ENCODE measurements at regions of chr16 and their contacts with region 1.

Region 1: DNA sequence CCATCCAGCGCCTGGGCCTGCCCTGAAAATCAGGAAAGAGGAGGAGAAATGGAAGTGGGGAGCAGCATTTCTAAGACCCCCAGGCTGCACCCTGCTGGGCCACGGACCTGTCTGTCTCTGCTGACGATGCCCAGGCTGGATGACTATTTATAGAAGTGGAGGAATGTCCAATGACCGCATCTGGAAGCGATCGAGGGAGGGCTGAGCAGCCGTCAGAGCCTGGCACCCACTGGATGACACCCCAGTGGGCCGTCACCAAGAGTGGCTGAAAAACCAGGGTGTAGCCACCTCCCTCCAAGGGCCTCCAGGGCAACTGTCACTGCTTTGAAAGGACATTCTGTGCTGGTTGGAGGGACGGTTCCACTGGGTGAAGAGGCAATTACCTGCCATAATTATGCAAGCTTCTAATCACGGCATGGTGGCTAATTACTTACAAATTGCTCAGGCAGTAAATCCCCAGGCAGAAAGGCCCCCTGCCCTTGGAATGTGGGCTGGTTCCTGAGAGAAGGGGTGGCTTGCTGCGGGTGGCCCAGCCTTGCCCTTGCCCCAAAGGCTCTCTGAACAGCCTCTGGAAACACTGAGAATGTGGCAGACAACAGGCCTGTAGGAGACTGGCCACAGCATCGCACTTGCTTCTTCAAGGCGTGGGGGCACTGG is 332.1 kb downstream of the C16orf95 start:
- DNase-seq: peak; percentile 73
- ATAC-seq: peak; percentile 85

Region 2: GRCh38 chr16:86751076-86752030 is 233.8 kb before region 1 on chr16:
- intact Hi-C with region 1: no loop called
- DNase-seq: no peak
- ATAC-seq: no peak

Region 3: DNA sequence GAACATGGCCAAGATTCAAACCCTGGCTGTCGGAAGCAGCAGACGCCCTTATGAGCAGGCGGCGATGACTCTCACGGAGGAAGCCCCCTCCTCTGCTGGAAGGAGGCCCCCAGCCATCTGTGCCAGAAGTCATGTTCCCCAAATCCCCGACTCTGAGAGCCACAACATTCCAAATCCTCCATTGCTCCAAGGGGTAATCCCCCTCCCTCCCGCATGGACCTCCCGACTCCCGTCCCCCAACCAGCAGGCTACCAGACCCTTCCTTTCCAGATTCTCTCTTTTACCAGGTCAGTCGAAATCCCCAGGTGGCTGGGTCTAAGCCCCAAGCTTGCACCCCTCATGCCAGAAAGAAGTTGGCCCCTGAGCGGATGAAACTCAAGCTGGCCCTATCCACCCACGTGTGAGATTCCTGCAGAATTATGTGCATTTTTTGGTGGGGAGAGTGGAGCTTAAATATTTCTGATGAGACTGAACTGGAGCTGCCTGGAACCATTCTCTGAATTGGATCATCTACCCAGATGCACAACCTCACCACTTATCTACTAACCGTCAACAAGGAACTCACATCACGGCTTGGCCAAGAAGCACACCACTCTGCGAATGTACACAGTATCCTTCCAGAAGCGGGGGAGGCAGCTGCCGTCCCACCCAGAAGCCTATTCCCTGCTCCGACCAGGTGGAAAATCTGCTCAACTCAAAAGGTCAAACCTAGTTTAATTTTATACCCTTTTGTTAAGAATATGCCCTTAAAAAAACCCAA is 48.6 kb after region 1 on chr16:
- intact Hi-C with region 1: loop called (anchors 5 kb)
- DNase-seq: peak; percentile 65
- ATAC-seq: peak; percentile 87

Measured in Right ventricle myocardium inferior (tissue), 1 donor.